GM23248 (cell line): ENCODE measurements at regions of chr16 and their contacts with region 1.

Region 1: DNA sequence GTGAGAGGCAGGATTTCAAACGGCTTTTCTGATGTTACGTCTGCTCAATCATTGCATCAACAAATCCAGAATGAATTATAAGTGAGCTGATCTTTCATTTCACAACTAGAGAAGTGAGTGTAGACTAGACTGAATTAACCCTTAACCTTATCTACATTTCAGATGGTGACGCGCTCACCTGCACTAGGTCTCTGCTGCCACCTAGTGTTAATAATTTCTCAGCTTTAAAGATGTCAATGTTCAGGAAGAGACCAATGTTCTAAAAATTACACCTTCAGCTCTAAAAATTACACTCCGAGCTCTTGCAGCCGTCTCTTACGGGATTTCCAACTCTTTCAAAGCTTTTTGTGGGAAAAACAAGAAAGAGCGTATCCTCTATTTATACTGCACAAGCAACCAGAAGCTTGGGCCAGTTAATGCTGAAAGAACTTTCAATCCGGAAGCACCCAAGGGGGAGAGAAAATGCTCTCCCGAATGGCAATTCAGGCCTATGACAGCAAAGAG is 88.2 kb upstream of the FA2H start:
- DNase-seq: peak; percentile 51
- H3K4me3 ChIP-seq: no peak overlapping the region
- H3K27ac ChIP-seq: no peak overlapping the region
- H3K4me1 ChIP-seq: peaks cover 8% of the 10 kb centered on the region
- H3K27me3 ChIP-seq: no peaks in the 10 kb centered on the region; the same call in 1 of the 2 replicates

Region 2: DNA sequence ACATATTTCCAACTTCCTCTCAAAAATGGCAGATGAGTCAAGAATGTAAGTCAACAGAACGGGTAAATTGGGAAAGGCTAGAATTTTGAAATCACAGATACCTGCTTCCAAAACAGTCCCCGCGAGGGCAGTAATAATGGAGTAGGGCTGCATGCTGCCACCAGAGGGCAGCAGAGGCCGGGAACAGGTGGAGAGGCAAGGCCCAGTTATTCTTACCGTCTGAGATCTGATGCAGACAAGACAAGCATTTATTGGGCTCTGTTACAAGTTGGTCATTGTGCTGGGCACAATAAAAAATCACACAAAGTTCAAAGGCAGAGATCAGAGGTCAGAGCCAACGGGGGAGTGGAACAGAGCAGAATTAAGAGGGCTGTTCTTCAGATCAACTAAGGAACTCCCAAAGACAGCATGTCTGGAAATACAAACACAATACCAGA is 153.3 kb before region 1 on chr16:
- in situ Hi-C with region 1: loop called (anchors 10 kb)
- DNase-seq: peak; percentile 75
- H3K4me3 ChIP-seq: no peak overlapping the region
- H3K27ac ChIP-seq: no peak overlapping the region
- H3K4me1 ChIP-seq: no peaks in the 10 kb centered on the region
- H3K27me3 ChIP-seq: peaks cover 6% of the 10 kb centered on the region